Gastrocnemius medialis (tissue), 4 donors: ENCODE measurements at regions of chr1 and their contacts with region 1.

Region 1: GRCh38 chr1:64823691-64824476 is 79.0 kb downstream of the RAVER2 start:
- DNase-seq: peak in 1 of 2 donors; percentile 46
- ATAC-seq: peak; percentile 60 to 83
- H3K4me3 ChIP-seq: no peak overlapping the region
- H3K27ac ChIP-seq: no peak overlapping the region
- H3K4me1 ChIP-seq: peaks cover 0 to 3% of the 10 kb centered on the region in 2 donors
- H3K27me3 ChIP-seq: no peaks in the 10 kb centered on the region
- CTCF ChIP-seq: peak; percentile 70 to 81 (median 80)
- POLR2A ChIP-seq: no peak

Region 2: DNA sequence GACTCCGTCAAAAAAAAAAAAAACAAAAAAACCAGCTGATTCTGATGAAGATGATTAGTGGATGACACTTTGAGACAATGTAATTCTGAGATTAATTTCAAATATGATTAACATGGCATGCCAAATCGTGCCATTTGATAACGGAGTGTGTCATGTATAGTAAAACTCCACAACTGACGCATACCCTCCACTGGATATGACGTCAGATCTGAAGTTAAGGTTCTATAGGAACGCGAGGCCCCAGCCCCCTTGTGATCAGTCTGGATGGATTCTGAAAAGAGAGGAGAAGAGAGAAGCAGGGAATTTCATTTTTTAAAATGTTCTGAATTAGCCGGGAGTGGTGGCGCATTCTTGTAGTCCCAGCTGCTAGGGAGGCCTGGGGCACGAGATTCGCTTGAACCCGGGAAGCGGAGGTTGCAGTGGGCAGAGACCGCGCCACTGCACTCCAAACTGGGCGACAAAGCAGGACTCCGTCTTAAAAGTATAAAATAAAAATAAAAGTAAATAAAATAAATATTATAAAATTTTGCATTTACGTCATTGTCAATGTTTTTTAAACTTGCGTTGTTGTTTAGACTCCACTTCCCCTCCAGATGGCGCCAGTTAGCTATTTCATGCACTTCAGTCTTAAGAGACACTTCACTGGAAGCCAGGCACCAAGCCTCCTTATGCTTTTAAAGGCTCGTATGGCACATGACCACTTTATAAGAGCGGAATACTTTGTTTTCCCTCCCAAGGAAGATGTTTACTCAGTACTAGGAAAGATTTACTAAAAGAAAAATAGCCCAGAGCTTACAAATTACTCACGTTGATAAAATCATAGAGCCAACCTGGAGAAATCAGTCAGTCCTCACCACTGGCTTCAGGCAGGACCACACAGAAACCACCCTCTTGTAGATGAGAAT is 555.0 kb before region 1 on chr1:
- in situ Hi-C with region 1: loop called (anchors 5 to 10 kb)
- intact Hi-C with region 1: loop called (anchors 1 kb)
- DNase-seq: peak; percentile 45 to 47
- ATAC-seq: peak; percentile 77 to 83
- H3K4me3 ChIP-seq: no peak overlapping the region
- H3K27ac ChIP-seq: no peak overlapping the region
- H3K4me1 ChIP-seq: no peaks in the 10 kb centered on the region
- H3K27me3 ChIP-seq: no peaks in the 10 kb centered on the region
- CTCF ChIP-seq: peak; percentile 52 to 79 (median 63)
- POLR2A ChIP-seq: no peak

Region 3: DNA sequence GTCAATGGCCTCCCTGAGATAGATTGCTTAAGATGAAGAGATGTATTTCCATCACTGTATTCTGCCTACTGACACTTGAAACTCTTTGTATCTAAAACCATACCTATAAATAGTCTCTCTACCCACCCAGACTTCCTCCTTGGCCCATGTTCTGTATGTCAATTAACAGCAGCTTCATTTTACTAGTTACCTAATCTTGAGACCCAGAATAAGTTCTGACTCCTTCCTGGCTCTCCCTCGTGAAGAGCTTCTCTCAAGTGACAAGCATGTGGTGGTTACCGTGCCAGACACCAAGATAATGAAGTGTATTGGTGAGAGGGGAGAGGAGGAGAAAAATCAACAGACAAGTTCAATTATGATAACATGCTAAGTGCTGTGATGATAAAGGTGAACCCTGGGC is 207.8 kb before region 1 on chr1:
- in situ Hi-C with region 1: no loop called
- intact Hi-C with region 1: no loop called
- DNase-seq: peak; percentile 63 to 73
- ATAC-seq: peak; percentile 99 to 100
- H3K4me3 ChIP-seq: no peak overlapping the region
- H3K27ac ChIP-seq: peak overlapping the region; percentile 66 to 80 (median 76)
- H3K4me1 ChIP-seq: peaks cover 14 to 17% of the 10 kb centered on the region in 2 donors
- H3K27me3 ChIP-seq: no peaks in the 10 kb centered on the region
- CTCF ChIP-seq: no peak
- POLR2A ChIP-seq: peak in 1 of 2 donors; percentile 31

Region 4: DNA sequence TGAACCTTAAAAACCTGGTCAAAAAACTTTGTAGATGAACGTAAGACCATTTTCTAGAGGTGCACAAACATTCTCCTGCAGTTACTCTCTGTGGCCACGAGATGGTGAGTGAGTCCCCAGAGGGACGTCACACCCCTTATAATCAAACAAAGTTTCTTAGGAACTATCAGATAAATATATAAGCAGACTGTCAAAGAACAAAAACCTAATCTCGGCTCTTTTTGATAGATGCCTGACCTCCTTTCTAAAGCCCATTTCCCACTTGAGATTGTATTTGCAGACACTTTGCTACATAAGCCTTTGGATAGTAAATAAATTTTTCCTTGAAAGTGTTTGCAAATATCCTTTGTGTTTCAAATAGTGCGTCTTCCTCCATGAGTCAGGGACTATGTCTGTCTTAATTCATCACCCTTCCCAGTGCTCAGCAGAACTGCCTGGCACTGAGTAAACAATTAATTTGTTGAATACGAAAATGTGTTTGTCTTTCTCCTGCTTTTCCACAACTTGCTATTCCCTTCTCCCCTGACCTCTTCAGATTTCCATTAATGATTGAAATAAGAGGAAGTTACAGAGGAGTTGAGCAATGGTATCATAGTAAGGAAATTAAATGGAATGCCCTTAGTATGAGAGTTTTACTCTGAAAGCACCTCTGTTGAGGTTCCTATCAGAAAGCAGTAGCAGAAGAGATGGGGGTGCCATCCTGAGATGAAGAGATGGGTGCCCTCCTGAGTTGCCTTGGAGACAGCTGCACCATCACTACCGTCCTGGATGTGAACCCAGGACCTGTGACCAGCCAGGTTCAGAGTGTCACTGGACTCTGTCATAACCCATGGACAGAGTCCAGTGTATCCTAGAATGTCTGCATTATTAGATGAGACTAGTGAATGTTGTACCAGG is 136.8 kb before region 1 on chr1:
- in situ Hi-C with region 1: loop called in 3 of 4 experiments (anchors 10 kb)
- intact Hi-C with region 1: loop called (anchors 1 kb)
- DNase-seq: no peak
- ATAC-seq: peak; percentile 52 to 60
- H3K4me3 ChIP-seq: no peak overlapping the region
- H3K27ac ChIP-seq: no peak overlapping the region
- H3K4me1 ChIP-seq: no peaks in the 10 kb centered on the region
- H3K27me3 ChIP-seq: no peaks in the 10 kb centered on the region
- CTCF ChIP-seq: peak; percentile 64 to 84 (median 69)
- POLR2A ChIP-seq: no peak

Region 5: DNA sequence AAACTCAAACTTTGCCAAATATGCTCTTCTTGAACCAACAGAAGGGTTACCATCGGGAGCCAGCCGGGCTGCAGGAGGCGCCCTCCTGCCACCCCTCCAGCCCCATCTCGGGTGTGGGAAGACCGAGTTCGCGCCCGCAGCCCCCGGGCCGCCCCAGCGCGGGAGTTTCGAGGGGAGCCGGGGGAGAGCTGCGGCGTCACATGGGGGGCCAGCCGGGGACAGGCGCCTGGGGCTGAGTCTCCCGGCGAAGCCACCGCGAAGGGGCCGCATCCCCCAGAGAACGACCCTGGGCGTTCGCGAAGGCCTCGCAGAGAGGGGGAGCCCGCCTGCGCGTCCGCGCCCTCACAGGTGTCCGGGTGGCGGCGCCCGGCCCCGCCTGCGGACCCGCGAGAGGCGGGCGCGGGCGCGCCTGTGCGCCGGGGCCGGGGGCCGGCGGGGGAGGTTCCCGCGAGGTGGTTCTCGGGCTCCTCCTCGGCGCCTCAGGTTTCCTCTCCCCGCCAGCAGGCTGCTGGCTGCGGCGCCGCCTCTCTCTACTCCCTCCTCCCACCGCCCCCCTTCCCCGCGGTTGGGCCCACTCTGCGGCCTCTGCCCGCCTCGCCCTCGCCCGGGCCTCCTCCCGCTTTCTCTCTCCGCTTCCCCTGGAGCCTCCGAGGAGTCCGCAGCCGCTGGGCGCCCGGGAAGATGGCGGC is 79.2 kb before region 1 on chr1 and contains the start of gene RAVER2:
- in situ Hi-C with region 1: no loop called
- intact Hi-C with region 1: loop called (anchors 2 kb)
- DNase-seq: peak; percentile 35 to 50
- ATAC-seq: peak; percentile 67 to 68
- H3K4me3 ChIP-seq: peak within 1 kb of the TSS; percentile 80 to 86 (median 83)
- H3K27ac ChIP-seq: peak within 1 kb of the TSS; percentile 82 to 89 (median 82)
- H3K4me1 ChIP-seq: peaks cover 10 to 40% of the 10 kb centered on the region in 2 donors
- H3K27me3 ChIP-seq: no peaks in the 10 kb centered on the region
- CTCF ChIP-seq: peak; percentile 19 to 55 (median 39)
- POLR2A ChIP-seq: peak; percentile 16 to 32
- total RNA-seq, gene RAVER2: 8.4 to 9.4 (median 9.1) TPM